Activated B cell treated with CpG ODN at 0.5 μM for 24 hours (primary cell): ENCODE measurements at regions of chr11 and their contacts with region 1.

Region 1: DNA sequence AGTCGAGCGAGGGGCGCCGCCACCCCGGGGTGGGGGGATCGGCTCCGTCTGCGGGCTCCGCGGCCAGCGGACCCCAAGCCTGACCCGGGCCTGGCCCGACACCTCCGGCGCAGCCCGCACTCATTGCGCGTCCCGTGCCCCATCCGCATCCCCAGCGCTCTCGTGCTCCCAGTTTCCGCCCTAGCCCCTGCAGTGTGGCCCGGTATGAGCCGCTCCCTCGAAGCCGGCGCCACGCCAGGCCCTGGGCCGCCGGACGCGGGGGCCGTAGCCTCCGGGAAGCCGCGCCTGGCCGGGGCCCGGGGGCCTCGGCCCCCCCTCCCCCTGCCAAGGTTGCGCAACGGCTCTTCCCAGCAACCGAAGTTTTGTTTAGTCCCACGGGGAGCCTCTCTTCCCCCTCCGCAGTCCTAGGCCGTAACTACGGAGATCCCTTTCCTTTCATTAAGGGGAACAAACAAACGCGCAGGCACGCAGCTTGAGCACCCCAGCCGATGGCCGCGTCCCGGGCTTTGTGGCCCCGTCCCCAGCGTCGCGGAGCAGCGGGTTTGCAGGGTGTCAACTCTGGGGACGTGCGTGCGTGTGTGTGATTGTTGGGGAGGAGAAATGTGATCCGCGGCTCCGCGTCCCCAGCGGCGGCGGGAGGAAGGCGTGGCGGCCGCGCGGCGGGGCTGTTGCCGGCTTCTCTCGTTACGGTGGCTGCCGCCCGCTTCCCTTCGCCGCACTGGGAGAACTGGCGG is 883 bp downstream of the HIPK3 start:
- DNase-seq: peak; percentile 64
- ATAC-seq: peak; percentile 37
- H3K4me3 Mint-ChIP-seq: peak overlapping the region; percentile 97
- H3K27ac Mint-ChIP-seq: peak overlapping the region; percentile 98
- H3K4me1 Mint-ChIP-seq: peaks cover 46% of the 10 kb centered on the region
- H3K27me3 Mint-ChIP-seq: no peaks in the 10 kb centered on the region
- CTCF ChIP-seq: no peak

Region 2: GRCh38 chr11:32893343-32894148 is 364.5 kb before region 1 on chr11:
- CTCF ChIA-PET with region 1: no interaction called
- POLR2A ChIA-PET with region 1: interaction called, 3 read pairs
- intact Hi-C with region 1: loop called (anchors 1 kb)
- DNase-seq: peak; percentile 65
- ATAC-seq: peak; percentile 51
- H3K4me3 Mint-ChIP-seq: peak overlapping the region; percentile 94
- H3K27ac Mint-ChIP-seq: peak overlapping the region; percentile 82
- H3K4me1 Mint-ChIP-seq: peaks cover 30% of the 10 kb centered on the region
- H3K27me3 Mint-ChIP-seq: no peaks in the 10 kb centered on the region
- CTCF ChIP-seq: no peak

Region 3: GRCh38 chr11:33161120-33162005 is 96.7 kb before region 1 on chr11 and contains the start of gene CSTF3:
- CTCF ChIA-PET with region 1: no interaction called
- POLR2A ChIA-PET with region 1: interaction called, 15 read pairs
- intact Hi-C with region 1: loop called (anchors 1 kb)
- DNase-seq: peak; percentile 92
- ATAC-seq: peak; percentile 96
- H3K4me3 Mint-ChIP-seq: peak within 1 kb of the TSS; percentile 99
- H3K27ac Mint-ChIP-seq: peak within 1 kb of the TSS; percentile 95
- H3K4me1 Mint-ChIP-seq: peaks cover 44% of the 10 kb centered on the region
- H3K27me3 Mint-ChIP-seq: no peaks in the 10 kb centered on the region
- CTCF ChIP-seq: no peak
- total RNA-seq, gene CSTF3: 30.0 and 33.5 TPM in 2 replicates

Region 4: DNA sequence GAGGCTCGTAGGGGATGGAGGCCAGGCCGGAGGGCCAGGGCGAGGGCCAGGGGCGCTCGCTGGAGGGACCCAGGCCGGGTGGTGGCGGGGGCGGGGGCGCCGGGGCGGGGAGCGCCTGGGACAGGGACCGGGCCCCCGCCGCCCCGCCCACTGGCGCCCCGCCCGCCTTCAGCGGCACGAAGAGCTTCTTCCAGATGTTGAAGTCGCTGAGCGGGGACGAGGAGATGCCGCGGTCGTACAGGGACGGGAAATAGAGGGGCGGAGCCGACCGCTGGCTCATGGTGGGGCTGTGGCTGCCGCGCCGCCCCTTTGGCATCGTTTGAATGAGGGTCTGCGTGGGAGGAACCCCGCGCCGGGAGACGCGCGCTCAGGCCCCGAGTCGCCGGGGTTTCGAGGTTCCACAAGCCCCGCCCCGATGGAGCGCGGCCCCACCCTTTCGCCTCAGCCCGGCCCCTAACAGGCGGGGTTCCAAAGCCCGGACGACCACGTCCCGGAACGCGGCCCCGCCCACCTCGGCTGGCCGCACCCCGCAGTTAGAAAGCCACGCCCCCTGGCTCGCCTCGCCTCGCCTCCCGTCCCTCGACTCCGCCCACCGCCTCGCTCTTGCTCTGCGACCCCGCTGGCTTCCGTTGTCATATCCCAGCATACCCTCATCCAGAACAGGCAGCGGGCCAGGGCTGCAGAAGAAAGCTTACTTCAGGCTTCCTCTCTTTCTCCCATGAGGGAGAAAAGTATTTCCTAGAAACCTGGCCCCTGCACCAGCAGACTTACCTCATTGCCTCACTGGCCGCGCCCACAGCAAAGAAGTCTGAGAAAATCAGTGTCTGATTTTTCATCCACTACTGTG is 442.6 kb after region 1 on chr11 and contains the start of gene C11orf91:
- CTCF ChIA-PET with region 1: no interaction called
- POLR2A ChIA-PET with region 1: no interaction called
- intact Hi-C with region 1: loop called (anchors 2 kb)
- DNase-seq: peak; percentile 97
- ATAC-seq: peak; percentile 98
- H3K4me3 Mint-ChIP-seq: peak within 1 kb of the TSS; percentile 91
- H3K27ac Mint-ChIP-seq: peak within 1 kb of the TSS; percentile 47
- H3K4me1 Mint-ChIP-seq: peaks cover 13% of the 10 kb centered on the region
- H3K27me3 Mint-ChIP-seq: peaks cover 2% of the 10 kb centered on the region
- CTCF ChIP-seq: no peak
- total RNA-seq, gene C11orf91: 0.49 TPM in 1 of 2 replicates, not detected in the other

Region 5: GRCh38 chr11:33773987-33774735 is 516.1 kb after region 1 on chr11 and contains the start of gene FBXO3:
- CTCF ChIA-PET with region 1: no interaction called
- POLR2A ChIA-PET with region 1: interaction called, 4 read pairs
- intact Hi-C with region 1: loop called (anchors 1 kb)
- DNase-seq: peak; percentile 80
- ATAC-seq: peak; percentile 92
- H3K4me3 Mint-ChIP-seq: peak within 1 kb of the TSS; percentile 96
- H3K27ac Mint-ChIP-seq: peak within 1 kb of the TSS; percentile 94
- H3K4me1 Mint-ChIP-seq: peaks cover 38% of the 10 kb centered on the region
- H3K27me3 Mint-ChIP-seq: peaks cover 15% of the 10 kb centered on the region
- CTCF ChIP-seq: no peak
- total RNA-seq, gene FBXO3: 22.3 and 23.5 TPM in 2 replicates

Region 6: GRCh38 chr11:34438529-34439507 is 1180.8 kb after region 1 on chr11 and contains the start of gene CAT:
- CTCF ChIA-PET with region 1: no interaction called
- POLR2A ChIA-PET with region 1: no interaction called
- intact Hi-C with region 1: loop called (anchors 2 kb)
- DNase-seq: peak; percentile 96
- ATAC-seq: peak; percentile 90
- H3K4me3 Mint-ChIP-seq: peak within 1 kb of the TSS; percentile 99
- H3K27ac Mint-ChIP-seq: peak within 1 kb of the TSS; percentile 98
- H3K4me1 Mint-ChIP-seq: peaks cover 43% of the 10 kb centered on the region
- H3K27me3 Mint-ChIP-seq: no peaks in the 10 kb centered on the region
- CTCF ChIP-seq: no peak
- total RNA-seq, gene CAT: 79.8 and 81.2 TPM in 2 replicates